ENCODE measurements at regions of chr6 and their contacts with region 1.

Region 1: GRCh38 chr6:168355716-168356449 is 36.3 kb upstream of the DACT2 start:
- DNase-seq: peak in 1 of 2 experiments; percentile 79
- H3K4me3 ChIP-seq: no peak overlapping the region
- H3K27ac ChIP-seq: no peak overlapping the region
- H3K4me1 ChIP-seq: no peaks in the 10 kb centered on the region
- H3K27me3 ChIP-seq: no peaks in the 10 kb centered on the region
- CTCF ChIP-seq: peak; percentile 69 to 75 (median 72)
- EP300 ChIP-seq: no peak
- POLR2A ChIP-seq: no peak
- RAD21 ChIP-seq: peak; percentile 86 to 87

Region 2: DNA sequence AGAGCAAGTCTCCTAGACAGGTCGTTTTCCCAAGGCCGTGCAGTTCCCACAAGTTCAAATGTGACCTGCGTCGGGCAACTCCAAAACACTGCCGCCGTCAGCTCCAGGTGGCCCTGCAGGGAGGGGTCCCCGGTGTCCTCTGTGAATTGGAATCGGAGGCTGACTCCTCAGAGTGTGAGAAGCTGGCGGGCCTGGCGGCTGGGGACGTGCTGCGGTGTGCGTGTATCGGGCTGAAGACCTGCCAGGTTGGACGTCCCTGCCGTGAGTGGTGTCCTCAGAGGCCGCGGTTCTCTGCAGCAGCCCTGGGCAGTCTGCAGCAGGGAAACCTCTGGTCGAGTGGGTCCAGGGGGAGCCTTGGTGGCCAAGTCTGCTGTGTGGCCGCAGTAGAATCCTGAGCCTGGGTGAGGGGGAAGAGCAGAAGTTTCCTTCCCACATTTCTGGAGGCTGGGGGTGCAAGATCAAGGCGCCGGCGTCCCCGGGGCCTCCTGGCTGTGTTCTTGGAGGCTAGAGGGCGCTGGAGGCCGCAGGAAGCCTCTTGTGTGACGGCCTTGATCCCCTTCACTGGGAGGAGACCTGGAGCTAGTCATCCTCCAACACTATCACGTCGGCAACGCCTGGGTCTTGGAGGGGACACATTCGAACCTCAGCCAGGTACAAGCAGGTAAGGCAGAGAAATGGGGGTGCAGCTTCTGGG is 161.7 kb before region 1 on chr6:
- CTCF ChIA-PET with region 1: interaction called, 13 read pairs
- POLR2A ChIA-PET with region 1: no interaction called
- DNase-seq: peak in 1 of 2 experiments; percentile 63
- H3K4me3 ChIP-seq: no peak overlapping the region
- H3K27ac ChIP-seq: no peak overlapping the region
- H3K4me1 ChIP-seq: no peaks in the 10 kb centered on the region; a peak in 1 of 7 replicates
- H3K27me3 ChIP-seq: no peaks in the 10 kb centered on the region
- CTCF ChIP-seq: peak in 2 of 3 experiments; percentile 39 to 52; a peak in 3 of 4 replicates
- EP300 ChIP-seq: no peak
- POLR2A ChIP-seq: no peak
- RAD21 ChIP-seq: peak; percentile 65 to 76

Region 3: DNA sequence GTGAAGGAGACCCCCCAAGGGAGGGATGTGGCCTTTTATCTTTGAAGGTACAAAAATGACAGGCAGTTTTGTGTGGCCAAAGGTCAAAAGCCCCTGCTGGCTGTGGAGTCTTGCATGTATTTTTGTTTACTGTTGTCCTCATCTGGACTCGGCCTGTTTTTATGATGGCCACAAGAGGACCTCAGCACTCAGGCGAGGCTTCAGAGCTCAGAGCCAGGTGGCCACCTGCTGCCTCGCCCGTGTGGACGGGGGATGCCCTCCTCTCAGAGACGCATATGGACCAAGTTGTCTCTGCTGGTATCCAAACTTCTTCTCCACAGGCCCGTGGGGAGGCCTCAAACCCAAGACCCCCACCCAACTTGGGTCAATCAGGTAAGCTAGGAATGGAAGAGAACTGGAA is 154.5 kb before region 1 on chr6:
- CTCF ChIA-PET with region 1: interaction called, 24 read pairs
- POLR2A ChIA-PET with region 1: no interaction called
- DNase-seq: no peak
- H3K4me3 ChIP-seq: no peak overlapping the region
- H3K27ac ChIP-seq: no peak overlapping the region
- H3K4me1 ChIP-seq: no peaks in the 10 kb centered on the region
- H3K27me3 ChIP-seq: no peaks in the 10 kb centered on the region
- CTCF ChIP-seq: peak; percentile 61 to 85 (median 72)
- EP300 ChIP-seq: no peak; a peak in 1 of 3 replicates
- POLR2A ChIP-seq: no peak
- RAD21 ChIP-seq: peak; percentile 81 to 92

Region 4: DNA sequence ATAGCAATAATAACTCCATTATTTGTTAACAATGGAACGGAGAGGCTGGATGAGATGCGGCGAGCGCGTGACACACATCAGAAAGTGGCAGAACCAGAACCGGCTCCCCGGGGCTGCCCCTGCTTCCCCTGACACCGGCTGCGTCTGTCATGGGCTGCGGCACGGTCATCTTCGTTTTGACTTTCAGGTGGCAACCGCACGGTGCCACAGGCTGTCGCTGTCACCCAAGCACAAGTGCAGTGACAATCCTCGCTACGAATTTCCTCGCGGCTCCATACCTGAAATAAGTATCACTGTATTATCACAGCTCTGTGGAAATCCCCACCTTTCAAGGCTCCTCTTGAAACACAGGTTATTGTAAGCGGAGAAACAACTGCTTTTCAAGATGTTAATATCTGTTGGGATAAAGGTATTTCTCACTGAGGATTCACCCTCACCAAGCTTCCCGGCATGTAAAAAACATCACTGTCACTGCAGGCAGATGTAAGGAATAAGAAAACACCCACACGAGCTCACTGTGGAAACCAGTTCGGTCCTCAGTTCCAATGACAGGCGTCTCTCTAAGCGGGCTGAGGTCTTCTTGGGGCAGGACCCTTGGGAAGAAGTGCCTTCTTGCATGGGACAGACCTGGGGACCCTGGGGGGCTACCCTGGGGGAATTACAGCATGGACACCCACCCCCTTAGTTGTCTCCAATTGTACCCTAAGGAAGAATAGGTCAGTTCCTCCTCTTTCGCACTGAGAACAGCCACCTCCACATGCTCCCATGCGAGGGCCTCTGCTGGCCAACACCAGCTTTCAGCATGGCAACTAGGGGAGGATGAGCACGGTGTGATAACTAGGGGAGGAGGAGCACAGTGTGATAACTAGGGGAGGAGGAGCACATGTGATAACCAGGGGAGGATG is 122.7 kb before region 1 on chr6:
- CTCF ChIA-PET with region 1: interaction called, 10 read pairs
- POLR2A ChIA-PET with region 1: no interaction called
- DNase-seq: no peak
- H3K4me3 ChIP-seq: no peak overlapping the region
- H3K27ac ChIP-seq: no peak overlapping the region
- H3K4me1 ChIP-seq: peaks cover 0 to 5% (median 2%) of the 10 kb centered on the region in 4 experiments; a peak in 4 of 7 replicates
- H3K27me3 ChIP-seq: no peaks in the 10 kb centered on the region; a peak in 1 of 7 replicates
- CTCF ChIP-seq: peak in 2 of 3 experiments; percentile 25 to 51; a peak in 2 of 4 replicates
- EP300 ChIP-seq: no peak
- POLR2A ChIP-seq: no peak
- RAD21 ChIP-seq: peak; percentile 14 to 45; a peak in 3 of 4 replicates

Region 5: GRCh38 chr6:168370310-168370991 is 14.6 kb after region 1 on chr6:
- CTCF ChIA-PET with region 1: interaction called, 14 read pairs
- POLR2A ChIA-PET with region 1: no interaction called
- DNase-seq: peak; percentile 46 to 97
- H3K4me3 ChIP-seq: no peak overlapping the region
- H3K27ac ChIP-seq: no peak overlapping the region
- H3K4me1 ChIP-seq: no peaks in the 10 kb centered on the region; a peak in 3 of 7 replicates
- H3K27me3 ChIP-seq: no peaks in the 10 kb centered on the region
- CTCF ChIP-seq: peak in 2 of 3 experiments; percentile 85 to 92; a peak in 3 of 4 replicates
- EP300 ChIP-seq: no peak
- POLR2A ChIP-seq: no peak
- RAD21 ChIP-seq: peak; percentile 98 to 100

Region 6: DNA sequence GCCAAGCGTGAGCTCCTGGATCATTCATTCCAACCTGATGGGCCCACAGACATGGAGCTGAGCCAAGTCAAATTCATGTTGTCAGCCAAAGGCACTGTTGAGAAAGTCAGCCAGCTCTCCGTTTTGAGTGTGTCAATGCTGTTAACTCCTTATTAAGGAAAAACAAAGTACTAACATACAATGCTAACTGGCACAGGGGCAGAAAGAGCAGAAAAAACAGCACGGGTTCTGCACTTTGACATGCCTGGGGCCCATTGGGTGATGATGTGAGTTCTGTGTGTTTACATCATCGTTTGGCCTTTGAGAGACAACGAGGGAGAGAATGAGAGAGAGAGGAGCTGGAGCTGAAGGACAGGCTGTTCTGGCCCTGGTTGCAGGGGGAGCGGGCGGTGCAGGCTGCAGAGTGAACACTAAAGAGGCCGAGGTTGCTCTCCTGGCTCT is 171.0 kb after region 1 on chr6:
- CTCF ChIA-PET with region 1: no interaction called
- POLR2A ChIA-PET with region 1: no interaction called
- DNase-seq: no peak
- H3K4me3 ChIP-seq: no peak overlapping the region
- H3K27ac ChIP-seq: no peak overlapping the region
- H3K4me1 ChIP-seq: peaks cover 0 to 3% (median 2%) of the 10 kb centered on the region in 4 experiments; a peak in 2 of 7 replicates
- H3K27me3 ChIP-seq: no peaks in the 10 kb centered on the region
- CTCF ChIP-seq: no peak
- EP300 ChIP-seq: no peak
- POLR2A ChIP-seq: no peak
- RAD21 ChIP-seq: no peak

Measured in H1 (cell line).